ENCODE measurements at regions of chr3 and their contacts with region 1.

Region 1: DNA sequence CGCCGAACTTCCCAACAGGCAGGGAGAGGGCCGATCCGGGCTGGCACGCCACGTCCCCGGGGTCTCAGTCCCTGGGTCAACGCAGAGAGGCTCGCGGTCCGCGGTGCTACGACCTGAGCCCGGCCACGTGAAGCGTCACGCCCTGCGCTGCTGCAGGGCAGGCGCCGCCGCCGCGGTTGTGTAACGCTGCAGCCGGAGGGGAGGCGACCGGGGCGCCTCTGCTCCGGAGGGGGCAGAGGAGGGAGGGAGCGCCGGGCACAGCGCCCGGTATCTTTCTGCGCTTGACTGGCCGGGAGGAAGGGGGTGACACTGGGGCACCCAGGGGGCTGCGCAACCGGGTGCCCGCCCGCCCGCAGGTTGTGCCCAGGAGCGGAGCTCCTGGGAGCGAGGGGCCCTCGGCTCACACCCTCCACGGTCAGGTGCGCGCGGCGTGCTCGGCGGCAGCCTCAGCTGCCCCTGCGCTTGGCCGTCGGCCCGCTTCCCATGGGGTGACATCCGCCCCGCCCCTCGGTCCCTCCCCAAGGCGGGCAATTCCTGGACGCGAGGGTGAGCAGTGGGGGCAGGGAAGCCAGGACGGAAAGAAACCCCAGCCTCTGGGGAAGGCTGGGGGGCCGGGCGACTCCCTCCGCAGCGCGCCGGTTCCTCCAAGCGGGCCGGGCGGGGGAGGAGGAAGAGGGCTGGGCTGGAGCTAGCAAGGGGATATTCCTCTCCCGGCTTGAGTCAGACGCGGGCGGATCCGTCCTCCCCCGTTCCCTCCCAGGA is 852 bp upstream of the BHLHE40 start:
- DNase-seq: peak; percentile 84
- ATAC-seq: peak; percentile 50
- H3K4me3 Mint-ChIP-seq: peak overlapping the region; percentile 93
- H3K27ac Mint-ChIP-seq: peak overlapping the region; percentile 73
- H3K4me1 Mint-ChIP-seq: peaks cover 35% of the 10 kb centered on the region
- H3K27me3 Mint-ChIP-seq: peaks cover 25% of the 10 kb centered on the region
- CTCF ChIP-seq: no peak

Region 2: DNA sequence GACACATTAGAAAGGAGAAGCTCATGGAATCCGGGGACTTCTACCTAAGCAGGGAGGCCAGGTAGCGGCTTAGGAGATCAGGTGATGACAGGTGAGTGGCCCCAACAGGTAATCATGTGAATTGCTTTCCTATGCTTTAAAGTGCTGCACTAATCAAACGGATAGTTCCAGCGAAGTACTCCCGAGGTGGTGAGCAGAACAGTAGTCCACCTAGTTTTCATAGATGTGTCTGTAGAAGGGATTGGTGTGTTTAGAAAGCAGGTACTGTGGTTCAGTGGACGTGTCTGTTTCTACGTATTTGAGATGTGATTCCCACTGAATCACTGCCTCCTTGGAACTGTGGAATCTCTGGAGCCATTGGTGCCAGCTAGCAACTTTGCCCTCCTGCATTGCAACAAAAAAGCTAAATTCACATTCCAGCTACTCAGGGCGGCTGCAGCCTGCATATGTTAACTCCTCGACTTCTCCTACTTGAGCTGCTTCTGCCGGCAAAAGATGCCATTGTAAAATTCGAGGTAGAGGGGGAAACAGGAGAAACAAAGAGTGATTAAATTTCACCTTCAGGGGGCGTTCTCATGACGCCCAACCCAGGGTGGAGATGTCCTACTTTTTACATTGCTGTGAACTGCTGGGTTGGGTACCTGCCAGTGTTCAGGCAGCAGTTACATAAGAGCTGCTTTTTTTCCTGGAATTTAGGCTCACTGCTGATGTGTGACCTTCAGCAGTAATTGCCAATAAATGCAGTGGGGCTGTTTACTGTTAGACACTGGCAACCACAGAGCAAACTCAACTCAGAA is 257.9 kb before region 1 on chr3:
- CTCF ChIA-PET with region 1: interaction called, 36 read pairs
- POLR2A ChIA-PET with region 1: interaction called, 6 read pairs
- DNase-seq: peak; percentile 28
- ATAC-seq: peak; percentile 76
- H3K4me3 Mint-ChIP-seq: peak overlapping the region; percentile 27
- H3K27ac Mint-ChIP-seq: peak overlapping the region; percentile 83
- H3K4me1 Mint-ChIP-seq: peaks cover 39% of the 10 kb centered on the region
- H3K27me3 Mint-ChIP-seq: no peaks in the 10 kb centered on the region
- CTCF ChIP-seq: 0 out of 2 replicates have a peak, but pooled peaks have one; percentile 17

Region 3: GRCh38 chr3:4943553-4943952 is 34.8 kb before region 1 on chr3:
- CTCF ChIA-PET with region 1: interaction called, 10 read pairs
- POLR2A ChIA-PET with region 1: no interaction called
- DNase-seq: peak; percentile 23
- ATAC-seq: peak; percentile 87
- H3K4me3 Mint-ChIP-seq: no peak overlapping the region
- H3K27ac Mint-ChIP-seq: no peak overlapping the region
- H3K4me1 Mint-ChIP-seq: no peaks in the 10 kb centered on the region
- H3K27me3 Mint-ChIP-seq: no peaks in the 10 kb centered on the region
- CTCF ChIP-seq: 0 out of 2 replicates have a peak, but pooled peaks have one; percentile 16

Region 4: DNA sequence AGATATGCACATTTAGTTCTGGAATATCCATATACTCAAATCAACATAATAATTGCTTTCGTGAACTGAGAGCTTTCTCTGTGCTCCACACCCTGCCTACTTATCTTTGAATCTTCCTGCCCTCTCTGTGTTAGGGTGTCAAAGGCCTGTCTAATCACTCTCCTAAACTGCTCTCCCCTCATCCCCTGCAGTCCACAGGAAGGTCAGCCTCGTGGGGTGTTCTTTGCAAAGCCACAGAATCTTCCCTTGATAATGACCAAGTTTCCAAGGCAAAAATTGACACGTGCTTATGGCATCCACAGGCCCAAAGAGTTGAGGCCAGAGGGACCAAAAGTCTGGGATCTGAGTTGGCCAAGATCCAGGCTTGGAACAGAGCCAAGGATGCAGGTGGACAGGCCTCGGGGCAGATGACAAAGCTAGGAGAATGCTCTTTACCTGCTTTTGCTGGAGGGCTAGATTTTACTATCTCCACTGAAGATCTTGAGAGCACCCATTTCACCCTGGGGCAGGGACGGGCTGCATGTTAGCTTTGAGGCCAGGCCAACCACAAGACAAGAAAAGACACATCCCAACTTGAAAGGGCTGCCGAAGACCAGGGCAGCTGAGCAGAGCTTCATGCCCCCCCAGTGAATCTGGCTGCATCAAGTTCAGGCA is 21.3 kb after region 1 on chr3:
- CTCF ChIA-PET with region 1: interaction called, 23 read pairs
- POLR2A ChIA-PET with region 1: interaction called, 3 read pairs
- DNase-seq: no peak
- ATAC-seq: no peak
- H3K4me3 Mint-ChIP-seq: no peak overlapping the region
- H3K27ac Mint-ChIP-seq: no peak overlapping the region
- H3K4me1 Mint-ChIP-seq: peaks cover 28% of the 10 kb centered on the region
- H3K27me3 Mint-ChIP-seq: no peaks in the 10 kb centered on the region; the same call in 1 of the 2 replicates
- CTCF ChIP-seq: no peak

Region 5: GRCh38 chr3:5026331-5027218 is 48.2 kb after region 1 on chr3:
- CTCF ChIA-PET with region 1: interaction called, 26 read pairs
- POLR2A ChIA-PET with region 1: interaction called, 7 read pairs
- DNase-seq: peak; percentile 84
- ATAC-seq: peak; percentile 95
- H3K4me3 Mint-ChIP-seq: peak overlapping the region; percentile 85
- H3K27ac Mint-ChIP-seq: peak overlapping the region; percentile 84
- H3K4me1 Mint-ChIP-seq: peaks cover 14% of the 10 kb centered on the region
- H3K27me3 Mint-ChIP-seq: no peaks in the 10 kb centered on the region; the same call in 1 of the 2 replicates
- CTCF ChIP-seq: no peak

Measured in WTC11 (cell line).